ENCODE measurements at regions of chrX and their contacts with region 1.

Region 1: GRCh38 chrX:153649178-153649914 is 2.3 kb downstream of the DUSP9 start:
- DNase-seq: peak; percentile 77
- H3K4me3 Mint-ChIP-seq: no peak overlapping the region
- H3K27ac Mint-ChIP-seq: no peak overlapping the region
- H3K4me1 Mint-ChIP-seq: peaks cover 2% of the 10 kb centered on the region
- H3K27me3 Mint-ChIP-seq: peaks cover 28% of the 10 kb centered on the region

Region 2: DNA sequence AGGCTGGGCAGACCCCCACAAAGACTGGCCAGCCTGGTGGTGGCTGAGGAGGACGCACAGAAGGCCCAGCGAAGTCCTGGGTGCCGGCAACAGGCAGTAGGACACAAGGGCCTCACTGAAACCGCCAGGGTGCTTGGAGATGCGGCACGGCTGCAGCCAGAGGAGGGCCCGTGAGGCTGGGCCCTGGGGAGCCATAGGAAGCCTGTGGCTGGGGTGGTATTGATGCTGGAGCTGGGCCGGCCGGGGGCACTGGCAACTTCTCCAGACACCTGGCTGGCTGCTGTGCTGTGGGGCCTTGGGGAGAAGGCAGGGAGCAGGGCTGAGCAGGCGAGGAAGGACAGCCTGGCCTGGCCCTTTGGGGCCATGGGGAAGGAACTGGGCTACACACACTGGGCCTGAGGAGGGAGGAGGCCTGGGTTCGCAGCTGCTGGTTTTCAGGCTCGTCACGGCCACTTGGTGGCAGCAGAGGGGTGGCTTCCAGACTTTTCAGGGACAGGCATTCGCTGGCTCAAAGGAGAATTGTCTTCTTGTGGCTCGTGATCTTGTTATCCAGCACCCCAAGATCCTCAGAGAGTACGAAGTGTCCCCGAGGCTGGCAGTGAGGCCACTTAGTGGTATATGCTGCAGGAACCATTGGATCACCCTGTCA is 94.7 kb before region 1 on chrX:
- intact Hi-C with region 1: loop called (anchors 1 kb)
- DNase-seq: peak; percentile 87
- H3K4me3 Mint-ChIP-seq: no peak overlapping the region
- H3K27ac Mint-ChIP-seq: no peak overlapping the region
- H3K4me1 Mint-ChIP-seq: no peaks in the 10 kb centered on the region
- H3K27me3 Mint-ChIP-seq: no peaks in the 10 kb centered on the region

Region 3: DNA sequence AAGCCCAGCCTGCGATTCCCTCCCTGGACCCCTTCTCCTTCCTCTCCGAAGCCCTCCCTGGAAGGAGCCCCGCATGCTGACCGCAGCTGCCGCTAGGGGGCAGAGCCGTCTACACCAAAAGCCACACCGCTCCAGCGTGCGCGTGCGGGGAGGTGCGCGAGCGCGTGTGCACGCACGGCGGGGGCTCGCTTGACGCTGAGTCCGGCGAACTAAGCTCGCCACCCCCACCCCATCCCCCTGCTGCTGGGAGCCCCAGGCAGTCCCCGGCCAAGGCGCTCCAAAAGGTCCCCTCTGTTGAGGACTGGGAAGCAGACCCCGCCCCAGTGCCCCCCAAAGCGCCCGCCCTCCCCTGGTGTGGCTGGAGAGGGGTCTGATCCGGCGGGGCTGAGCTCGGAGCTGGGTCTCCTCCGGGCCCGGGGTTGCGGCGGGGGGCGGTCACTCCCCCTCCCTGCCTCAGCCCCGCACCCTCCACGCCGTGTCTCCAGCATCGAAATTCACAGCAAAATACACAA is 39.4 kb before region 1 on chrX:
- intact Hi-C with region 1: loop called (anchors 5 kb)
- DNase-seq: peak; percentile 91
- H3K4me3 Mint-ChIP-seq: peak overlapping the region; percentile 82
- H3K27ac Mint-ChIP-seq: peak overlapping the region; percentile 77
- H3K4me1 Mint-ChIP-seq: peaks cover 8% of the 10 kb centered on the region
- H3K27me3 Mint-ChIP-seq: peaks cover 12% of the 10 kb centered on the region

Region 4: GRCh38 chrX:153662266-153662665 is 12.9 kb after region 1 on chrX:
- intact Hi-C with region 1: loop called (anchors 2 kb)
- DNase-seq: peak; percentile 84
- H3K4me3 Mint-ChIP-seq: peak overlapping the region; percentile 67
- H3K27ac Mint-ChIP-seq: no peak overlapping the region
- H3K4me1 Mint-ChIP-seq: no peaks in the 10 kb centered on the region
- H3K27me3 Mint-ChIP-seq: peaks cover 38% of the 10 kb centered on the region

Measured in activated CD4-positive, alpha-beta T cell treated with anti-CD3 and anti-CD28 coated beads, Interleukin-2, amount 10 ng/mL, durations not matched to agents 24 days and 14 days (primary cell).